K562 (cell line): ENCODE measurements at regions of chr20 and their contacts with region 1.

Region 1: DNA sequence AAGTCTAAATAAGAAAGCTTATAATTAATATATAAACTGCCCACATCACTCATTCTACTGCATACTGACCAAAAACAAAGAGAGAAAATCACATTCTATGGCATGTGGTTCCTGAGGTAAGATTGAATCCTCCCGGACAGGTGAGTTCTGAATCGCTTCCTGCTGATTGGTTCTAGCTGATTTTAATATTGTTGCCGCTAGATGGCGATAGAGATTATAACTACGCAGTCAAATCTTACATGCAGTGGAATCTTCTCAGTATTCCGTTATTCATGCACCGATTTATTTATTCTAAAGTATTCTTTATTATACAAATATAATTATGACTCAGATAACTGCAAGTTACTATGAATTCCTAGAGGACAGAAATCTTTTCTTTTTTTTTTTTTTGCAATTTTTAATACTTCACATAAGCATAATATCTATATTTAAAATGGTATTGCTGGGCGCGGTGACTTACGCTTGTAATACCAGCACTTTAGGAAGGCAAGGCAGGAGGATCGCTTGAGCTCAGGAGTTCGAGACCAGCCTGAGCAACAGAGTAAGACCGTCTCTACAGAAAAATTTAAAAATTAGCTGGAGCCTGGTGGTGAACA is 24.2 kb upstream of the TMX4 start:
- DNase-seq: peak; percentile 27 to 45 (median 40)
- ATAC-seq: peak; percentile 78
- H3K4me3 ChIP-seq: no peak overlapping the region
- H3K27ac ChIP-seq: no peak overlapping the region
- H3K4me1 ChIP-seq: no peaks in the 10 kb centered on the region
- H3K27me3 ChIP-seq: no peaks in the 10 kb centered on the region
- CTCF ChIP-seq: peak; percentile 16 to 59 (median 28); a peak in 3 of 6 replicates
- EP300 ChIP-seq: no peak
- POLR2A ChIP-seq: no peak
- RAD21 ChIP-seq: peak; percentile 52 to 65

Region 2: GRCh38 chr20:8305449-8305978 is 261.7 kb after region 1 on chr20:
- CTCF ChIA-PET with region 1: no interaction called
- POLR2A ChIA-PET with region 1: no interaction called
- in situ Hi-C with region 1: no loop called
- intact Hi-C with region 1: loop called (anchors 10 kb)
- DNase-seq: peak; percentile 24 to 63 (median 32)
- ATAC-seq: peak; percentile 70
- H3K4me3 ChIP-seq: no peak overlapping the region
- H3K27ac ChIP-seq: no peak overlapping the region
- H3K4me1 ChIP-seq: no peaks in the 10 kb centered on the region
- H3K27me3 ChIP-seq: no peaks in the 10 kb centered on the region
- CTCF ChIP-seq: peak; percentile 36 to 63 (median 50)
- EP300 ChIP-seq: no peak
- POLR2A ChIP-seq: no peak
- RAD21 ChIP-seq: peak in 1 of 2 experiments; percentile 45; a peak in 2 of 4 replicates